ENCODE measurements at regions of chr11 and their contacts with region 1.

Region 1: GRCh38 chr11:535519-536454 is at the start of gene HRAS:
- DNase-seq: peak; percentile 96
- ATAC-seq: peak; percentile 76
- H3K4me3 ChIP-seq: peak within 1 kb of the TSS; percentile 68 to 80 (median 72)
- H3K4me3 Mint-ChIP-seq: peak within 1 kb of the TSS; percentile 97
- H3K27ac ChIP-seq: peak within 1 kb of the TSS; percentile 99
- H3K27ac Mint-ChIP-seq: peak within 1 kb of the TSS; percentile 99
- H3K4me1 ChIP-seq: peaks cover 17 to 35% of the 10 kb centered on the region in 2 donors
- H3K4me1 Mint-ChIP-seq: peaks cover 20% of the 10 kb centered on the region
- H3K27me3 ChIP-seq: no peaks in the 10 kb centered on the region
- H3K27me3 Mint-ChIP-seq: no peaks in the 10 kb centered on the region
- CTCF ChIP-seq: no peak
- total RNA-seq, gene HRAS: 63.5 and 66.2 TPM in 2 replicates

Region 2: DNA sequence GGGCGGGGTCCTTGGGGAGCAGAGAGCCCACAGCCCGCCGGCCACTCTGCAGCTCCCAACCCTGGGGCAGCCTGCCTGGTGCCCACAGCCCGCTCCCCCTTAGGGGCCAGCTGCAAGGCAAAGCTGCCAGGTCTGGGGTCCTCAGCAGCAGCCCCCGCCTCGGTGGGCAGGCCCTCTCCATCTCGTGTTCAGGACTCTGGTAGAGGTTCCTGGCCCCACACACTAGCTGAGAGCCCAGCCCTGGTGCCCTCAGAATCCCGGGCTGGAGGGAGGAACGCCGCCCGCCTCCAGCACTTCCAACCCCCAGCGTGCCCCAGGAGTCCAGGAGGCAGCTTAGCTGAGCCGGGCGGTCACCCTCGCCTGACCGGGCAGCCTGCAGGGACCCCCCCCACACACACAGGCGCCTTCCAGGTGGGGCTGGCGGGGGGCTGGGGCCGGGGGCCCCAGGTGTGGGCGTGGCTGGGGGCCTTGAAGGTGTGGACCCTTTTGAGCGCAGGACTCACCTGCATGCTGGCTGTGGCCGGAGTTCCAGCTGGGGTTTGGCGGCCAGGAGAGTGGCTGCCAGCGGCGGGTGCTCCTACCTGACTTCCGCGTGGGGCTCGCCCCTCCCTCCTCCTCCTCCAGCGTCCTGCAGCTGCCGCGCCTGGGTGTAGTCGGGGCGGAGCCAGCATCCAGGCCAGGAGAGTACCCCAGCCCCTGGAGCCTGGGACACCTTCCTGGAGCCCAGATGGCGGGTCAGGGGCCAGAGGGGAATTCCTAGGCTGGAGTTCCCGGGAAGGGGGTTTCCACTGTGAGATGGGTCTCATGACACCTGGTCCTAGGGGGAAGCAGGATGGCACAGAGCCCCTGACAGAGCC is 94.1 kb before region 1 on chr11 and contains the start of gene ANO9:
- CTCF ChIA-PET with region 1: no interaction called
- POLR2A ChIA-PET with region 1: no interaction called
- intact Hi-C with region 1: no loop called
- DNase-seq: peak; percentile 78
- ATAC-seq: peak; percentile 86
- H3K4me3 ChIP-seq: peak within 1 kb of the TSS in 4 of 5 experiments; percentile 41 to 58 (median 52)
- H3K4me3 Mint-ChIP-seq: peak within 1 kb of the TSS; percentile 75
- H3K27ac ChIP-seq: peak within 1 kb of the TSS in 1 of 2 donors; percentile 64
- H3K27ac Mint-ChIP-seq: no peak within 1 kb of the TSS
- H3K4me1 ChIP-seq: peaks cover 6 to 14% of the 10 kb centered on the region in 2 donors
- H3K4me1 Mint-ChIP-seq: peaks cover 13% of the 10 kb centered on the region
- H3K27me3 ChIP-seq: no peaks in the 10 kb centered on the region
- H3K27me3 Mint-ChIP-seq: no peaks in the 10 kb centered on the region
- CTCF ChIP-seq: no peak
- total RNA-seq, gene ANO9: 62.0 and 63.9 TPM in 2 replicates

Region 3: DNA sequence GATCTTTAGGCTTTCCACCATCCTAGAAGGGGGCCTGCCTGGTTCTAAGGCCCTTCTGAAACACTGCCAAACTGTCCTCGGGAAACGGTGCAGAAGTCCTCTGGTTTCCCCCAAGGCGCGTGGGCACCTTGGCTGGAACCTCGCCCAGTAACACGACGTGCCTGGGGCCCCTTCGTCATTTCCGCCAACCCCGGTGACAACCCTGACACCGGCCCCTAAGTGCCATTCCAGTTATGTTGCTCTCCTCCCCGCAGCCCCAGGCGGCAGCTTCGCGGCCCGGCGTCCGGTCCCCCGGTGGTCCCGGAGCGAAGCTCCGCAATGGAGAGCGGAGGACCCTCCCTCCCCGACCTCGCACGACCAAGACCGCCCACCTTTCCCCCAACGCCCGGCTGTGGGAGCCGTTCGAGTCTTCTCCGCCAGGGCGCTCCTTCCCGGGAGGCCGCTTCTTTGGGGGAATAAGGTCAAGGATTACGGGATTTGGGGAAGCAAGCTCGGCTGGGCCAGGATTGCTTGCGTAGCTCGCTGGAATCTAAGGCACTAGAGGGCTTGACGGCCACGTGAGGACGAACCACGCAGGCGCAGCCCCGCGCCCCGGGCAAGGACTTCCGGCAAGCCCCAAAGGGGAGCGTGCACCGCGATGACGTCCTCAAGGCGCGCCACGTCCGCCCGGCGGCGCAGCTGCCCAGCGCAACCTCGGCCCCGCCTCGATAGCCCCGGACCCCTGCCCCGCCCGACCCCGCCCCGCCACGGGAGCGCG is 29.4 kb before region 1 on chr11:
- CTCF ChIA-PET with region 1: interaction called, 3 read pairs
- POLR2A ChIA-PET with region 1: interaction called, 22 read pairs
- intact Hi-C with region 1: loop called (anchors 1 kb)
- DNase-seq: peak; percentile 97
- ATAC-seq: peak; percentile 70
- H3K4me3 ChIP-seq: peak overlapping the region; percentile 38 to 100 (median 98)
- H3K4me3 Mint-ChIP-seq: peak overlapping the region; percentile 99
- H3K27ac ChIP-seq: peak overlapping the region; percentile 100
- H3K27ac Mint-ChIP-seq: peak overlapping the region; percentile 100
- H3K4me1 ChIP-seq: peaks cover 28 to 45% of the 10 kb centered on the region in 2 donors
- H3K4me1 Mint-ChIP-seq: peaks cover 38% of the 10 kb centered on the region
- H3K27me3 ChIP-seq: peaks cover 0 to 10% (median 0%) of the 10 kb centered on the region in 4 experiments
- H3K27me3 Mint-ChIP-seq: no peaks in the 10 kb centered on the region
- CTCF ChIP-seq: no peak

Region 4: DNA sequence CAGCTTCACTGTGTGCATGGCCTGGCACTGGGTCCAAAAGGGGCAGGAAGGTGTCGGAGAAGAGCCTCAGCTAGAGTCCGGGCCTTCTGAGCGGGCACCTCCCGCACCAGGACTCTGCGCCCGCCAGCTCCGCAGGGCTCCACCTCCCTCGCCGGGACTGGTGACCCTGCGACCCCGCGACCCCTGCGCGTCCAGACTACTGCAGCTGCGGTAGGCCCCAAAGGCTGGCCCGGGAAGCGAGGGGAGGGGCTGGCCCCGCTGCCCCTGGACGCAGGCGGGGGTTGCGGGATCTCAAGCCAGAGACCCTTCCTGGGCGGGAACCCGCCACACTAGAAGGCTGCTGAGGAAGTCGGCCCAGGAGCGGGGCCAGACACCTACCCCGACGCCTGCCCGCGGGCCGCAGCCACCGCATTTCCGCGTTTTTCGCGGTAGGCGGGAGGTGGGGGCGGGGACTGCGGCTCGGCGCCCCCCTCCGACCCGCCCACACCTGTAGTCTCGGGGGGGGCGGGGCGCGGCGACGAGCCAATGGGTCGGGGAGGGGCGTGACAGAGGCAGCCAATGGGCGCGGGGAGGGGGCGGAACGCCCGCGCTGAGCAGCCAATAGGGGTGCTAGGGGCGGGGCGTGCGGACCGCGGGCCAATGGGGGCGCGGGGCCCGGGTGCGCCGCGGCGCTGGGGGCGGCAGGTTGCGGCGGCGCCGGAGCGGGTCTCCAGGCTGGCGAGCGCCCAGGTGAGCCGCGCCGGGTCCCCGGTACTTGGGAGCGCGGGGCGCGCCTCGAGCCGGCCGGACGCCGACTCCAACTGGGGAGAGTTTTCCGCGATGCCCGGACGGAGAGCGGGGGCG is 24.7 kb after region 1 on chr11 and contains the starts of genes LMNTD2 and RASSF7:
- CTCF ChIA-PET with region 1: interaction called, 6 read pairs
- POLR2A ChIA-PET with region 1: interaction called, 6 read pairs
- intact Hi-C with region 1: loop called (anchors 1 kb)
- DNase-seq: peak; percentile 95
- ATAC-seq: peak; percentile 97
- H3K4me3 ChIP-seq: peak within 1 kb of the TSS; percentile 15 to 70 (median 66)
- H3K4me3 Mint-ChIP-seq: peak within 1 kb of the TSS; percentile 88
- H3K27ac ChIP-seq: peak within 1 kb of the TSS; percentile 75 to 89
- H3K27ac Mint-ChIP-seq: peak within 1 kb of the TSS; percentile 83
- H3K4me1 ChIP-seq: peaks cover 14 to 29% of the 10 kb centered on the region in 2 donors
- H3K4me1 Mint-ChIP-seq: peaks cover 16% of the 10 kb centered on the region
- H3K27me3 ChIP-seq: peaks cover 0 to 8% (median 2%) of the 10 kb centered on the region in 4 experiments
- H3K27me3 Mint-ChIP-seq: no peaks in the 10 kb centered on the region
- CTCF ChIP-seq: no peak
- total RNA-seq, gene LMNTD2: 19.7 and 21.4 TPM in 2 replicates
- total RNA-seq, gene RASSF7: 24.7 and 29.8 TPM in 2 replicates

Region 5: DNA sequence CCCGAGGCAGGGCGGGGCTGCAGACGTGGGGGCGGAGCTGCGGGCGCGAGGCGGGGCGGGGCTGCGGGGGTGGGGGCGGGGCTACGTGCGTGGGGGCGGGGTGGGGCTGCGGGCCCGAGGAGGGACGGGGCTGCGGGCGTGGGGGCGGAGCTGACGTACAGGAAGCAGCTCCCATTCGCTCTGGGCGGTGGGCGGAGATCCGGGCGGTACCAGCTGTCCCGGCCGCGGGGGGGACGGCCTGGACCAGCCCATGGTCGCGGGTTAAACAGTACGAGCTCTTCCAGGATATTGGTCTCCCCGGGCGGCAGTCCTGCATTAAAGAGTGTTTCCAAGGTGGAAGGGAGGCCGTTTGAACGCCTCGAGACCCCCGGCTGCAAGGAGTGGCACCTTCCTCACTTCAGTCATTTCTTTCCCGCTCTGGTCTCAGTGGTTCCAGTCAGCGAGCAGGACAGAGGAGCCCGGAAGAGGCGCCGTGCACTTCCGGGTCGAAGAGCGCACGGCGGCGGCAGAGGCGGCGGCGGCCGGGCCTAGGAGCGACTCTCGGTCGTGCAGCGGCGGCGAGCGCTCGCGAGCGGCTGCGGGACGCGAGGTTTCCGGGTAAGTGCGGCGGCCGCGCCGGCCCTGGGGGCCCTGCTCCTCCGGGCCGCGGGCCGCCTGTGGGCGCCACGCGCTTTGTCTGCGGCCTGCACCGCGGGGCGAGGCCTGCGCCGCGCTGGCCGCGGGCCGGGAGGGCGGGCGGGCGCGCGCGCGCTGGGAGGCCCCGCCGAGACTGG is 40.4 kb after region 1 on chr11 and contains the start of gene PHRF1:
- CTCF ChIA-PET with region 1: interaction called, 3 read pairs
- POLR2A ChIA-PET with region 1: interaction called, 26 read pairs
- intact Hi-C with region 1: loop called (anchors 1 kb)
- DNase-seq: peak; percentile 98
- ATAC-seq: peak; percentile 87
- H3K4me3 ChIP-seq: peak within 1 kb of the TSS; percentile 65 to 95 (median 86)
- H3K4me3 Mint-ChIP-seq: peak within 1 kb of the TSS; percentile 93
- H3K27ac ChIP-seq: peak within 1 kb of the TSS; percentile 97 to 98
- H3K27ac Mint-ChIP-seq: peak within 1 kb of the TSS; percentile 99
- H3K4me1 ChIP-seq: peaks cover 30 to 44% of the 10 kb centered on the region in 2 donors
- H3K4me1 Mint-ChIP-seq: peaks cover 44% of the 10 kb centered on the region
- H3K27me3 ChIP-seq: peaks cover 0 to 18% (median 8%) of the 10 kb centered on the region in 4 experiments
- H3K27me3 Mint-ChIP-seq: peaks cover 15% of the 10 kb centered on the region
- CTCF ChIP-seq: no peak
- total RNA-seq, gene PHRF1: 57.9 and 63.5 TPM in 2 replicates

Region 6: GRCh38 chr11:597166-597725 is 61.5 kb after region 1 on chr11:
- CTCF ChIA-PET with region 1: no interaction called
- POLR2A ChIA-PET with region 1: no interaction called
- intact Hi-C with region 1: no loop called
- DNase-seq: no peak
- ATAC-seq: no peak
- H3K4me3 ChIP-seq: no peak overlapping the region
- H3K4me3 Mint-ChIP-seq: no peak overlapping the region
- H3K27ac ChIP-seq: no peak overlapping the region
- H3K27ac Mint-ChIP-seq: no peak overlapping the region
- H3K4me1 ChIP-seq: no peaks in the 10 kb centered on the region
- H3K4me1 Mint-ChIP-seq: no peaks in the 10 kb centered on the region
- H3K27me3 ChIP-seq: no peaks in the 10 kb centered on the region
- H3K27me3 Mint-ChIP-seq: no peaks in the 10 kb centered on the region
- CTCF ChIP-seq: no peak

Region 7: DNA sequence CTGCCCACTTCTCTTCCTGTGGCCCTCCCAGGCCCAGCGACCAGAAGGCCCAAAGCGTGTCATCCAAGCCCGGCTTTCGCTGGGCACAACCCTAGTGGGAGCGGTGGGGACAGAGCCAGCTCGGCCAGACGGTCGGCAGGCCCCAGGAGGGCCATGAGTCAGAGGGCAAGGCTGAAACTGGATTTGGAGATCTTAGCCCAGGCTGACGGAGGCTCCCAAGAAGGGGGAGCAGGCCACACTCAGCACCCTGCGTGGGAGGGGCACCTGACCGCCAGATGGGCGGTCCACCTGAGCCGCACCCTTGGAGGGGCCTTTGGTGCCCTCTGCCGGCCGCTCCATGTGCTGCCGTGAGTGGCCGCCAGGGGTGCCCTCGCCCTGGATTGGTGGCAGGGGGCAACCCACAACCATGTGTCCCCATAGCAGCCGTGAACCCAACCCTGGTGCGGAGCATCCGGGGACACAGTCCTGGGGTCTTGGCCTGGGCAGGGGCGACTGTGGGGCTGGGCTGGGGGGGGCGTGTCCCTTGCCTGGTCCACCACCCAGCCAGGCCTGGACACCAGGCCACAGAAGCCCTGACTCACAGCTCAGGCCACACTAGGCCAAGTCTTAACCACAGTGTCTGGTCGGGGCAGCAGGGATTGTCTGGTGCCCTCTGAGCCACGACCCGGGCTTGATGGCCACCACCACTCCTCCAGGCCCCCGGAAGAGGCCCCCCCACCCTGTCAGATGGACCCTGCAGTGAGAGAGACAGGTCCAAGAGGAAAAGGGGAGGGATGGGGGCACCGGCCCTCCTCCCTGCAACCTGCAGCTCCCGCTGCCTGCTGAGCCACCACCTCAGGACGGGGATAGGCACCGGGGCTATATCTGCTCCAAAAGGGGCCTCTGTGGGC is 192.3 kb after region 1 on chr11:
- CTCF ChIA-PET with region 1: interaction called, 9 read pairs
- POLR2A ChIA-PET with region 1: interaction called, 4 read pairs
- intact Hi-C with region 1: loop called (anchors 5 kb)
- DNase-seq: peak; percentile 85
- ATAC-seq: peak; percentile 85
- H3K4me3 ChIP-seq: no peak overlapping the region
- H3K4me3 Mint-ChIP-seq: no peak overlapping the region
- H3K27ac ChIP-seq: no peak overlapping the region
- H3K27ac Mint-ChIP-seq: no peak overlapping the region
- H3K4me1 ChIP-seq: peaks cover 14 to 29% of the 10 kb centered on the region in 2 donors
- H3K4me1 Mint-ChIP-seq: peaks cover 12% of the 10 kb centered on the region
- H3K27me3 ChIP-seq: peaks cover 0 to 24% (median 0%) of the 10 kb centered on the region in 4 experiments
- H3K27me3 Mint-ChIP-seq: peaks cover 4% of the 10 kb centered on the region
- CTCF ChIP-seq: peak; percentile 97

Region 8: GRCh38 chr11:819129-819931 is 283.5 kb after region 1 on chr11:
- CTCF ChIA-PET with region 1: no interaction called
- POLR2A ChIA-PET with region 1: interaction called, 11 read pairs
- intact Hi-C with region 1: no loop called
- DNase-seq: peak; percentile 96
- ATAC-seq: peak; percentile 81
- H3K4me3 ChIP-seq: peak overlapping the region in 4 of 5 experiments; percentile 58 to 82 (median 77)
- H3K4me3 Mint-ChIP-seq: peak overlapping the region; percentile 92
- H3K27ac ChIP-seq: peak overlapping the region; percentile 68 to 91
- H3K27ac Mint-ChIP-seq: peak overlapping the region; percentile 91
- H3K4me1 ChIP-seq: peaks cover 16 to 26% of the 10 kb centered on the region in 2 donors
- H3K4me1 Mint-ChIP-seq: peaks cover 20% of the 10 kb centered on the region
- H3K27me3 ChIP-seq: no peaks in the 10 kb centered on the region
- H3K27me3 Mint-ChIP-seq: no peaks in the 10 kb centered on the region
- CTCF ChIP-seq: peak; percentile 30